ENCODE measurements at regions of chr3 and their contacts with region 1.

Region 1: DNA sequence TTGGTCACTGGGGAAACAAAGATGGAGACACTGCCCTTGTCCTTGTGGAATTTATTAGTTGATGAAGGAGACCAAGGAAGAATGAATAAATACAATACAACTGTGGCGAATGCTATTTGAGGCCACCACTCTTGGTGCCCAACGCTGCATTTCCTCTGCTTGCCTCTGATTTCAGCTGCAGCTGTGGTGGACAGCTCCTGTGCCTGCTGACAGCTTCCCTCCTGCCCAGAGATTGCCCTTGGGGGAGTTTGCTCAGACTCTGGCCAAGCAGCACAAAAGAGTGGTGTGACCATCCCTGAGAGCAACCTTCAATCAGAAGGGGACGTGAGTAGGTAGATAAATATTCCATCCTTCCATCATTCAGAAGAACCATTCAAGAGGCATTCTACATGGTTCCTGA is 64.6 kb upstream of the FHIT start:
- DNase-seq: peak in 2 of 5 donors; percentile 24 to 33
- ATAC-seq: peak in 3 of 4 donors; percentile 65 to 83 (median 71)
- H3K4me3 ChIP-seq: no peak overlapping the region
- H3K27ac ChIP-seq: no peak overlapping the region
- H3K4me1 ChIP-seq: no peaks in the 10 kb centered on the region
- H3K27me3 ChIP-seq: peaks cover 0 to 3% (median 0%) of the 10 kb centered on the region in 9 donors
- CTCF ChIP-seq: no peak
- POLR2A ChIP-seq: no peak

Region 2: DNA sequence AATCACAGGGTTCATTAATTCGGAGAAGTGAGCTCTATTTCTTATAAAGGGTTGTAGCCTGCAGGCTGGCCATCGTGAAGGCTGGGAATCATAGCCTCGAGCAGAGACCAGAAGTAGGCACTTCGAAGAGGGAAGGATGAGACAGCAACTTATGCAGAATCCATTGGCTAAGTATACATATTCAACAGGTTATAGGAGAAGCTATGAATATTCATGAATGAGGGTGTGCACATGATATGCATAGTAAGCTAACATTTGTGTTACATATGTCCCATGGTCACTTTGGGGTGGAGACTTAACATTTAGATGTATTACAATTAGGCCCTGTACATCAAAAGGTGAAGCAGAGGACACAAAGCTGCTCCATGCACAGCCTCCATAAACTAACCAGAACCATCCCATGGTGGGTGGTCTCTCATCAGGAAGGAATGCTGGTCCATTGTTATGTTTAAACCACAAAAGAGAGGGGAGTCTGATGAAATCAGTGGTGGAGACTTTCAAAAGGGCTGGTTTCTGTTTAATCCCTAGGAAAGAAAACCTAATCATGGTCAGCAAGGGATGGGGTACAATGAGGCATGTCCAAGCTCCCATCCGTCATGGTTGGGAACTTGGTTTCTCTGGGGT is 16.2 kb after region 1 on chr3:
- intact Hi-C with region 1: loop called in 1 of 10 experiments (anchors 1 kb)
- DNase-seq: no peak
- ATAC-seq: no peak
- H3K4me3 ChIP-seq: no peak overlapping the region
- H3K27ac ChIP-seq: no peak overlapping the region
- H3K4me1 ChIP-seq: no peaks in the 10 kb centered on the region
- H3K27me3 ChIP-seq: no peaks in the 10 kb centered on the region
- CTCF ChIP-seq: no peak
- POLR2A ChIP-seq: no peak